ENCODE measurements at regions of chr11 and their contacts with region 1.

Region 1: GRCh38 chr11:111230122-111230465 is 15.4 kb upstream of the POU2AF2 start:
- DNase-seq: no peak
- ATAC-seq: peak in 1 of 2 donors; percentile 30
- H3K4me3 ChIP-seq: peak overlapping the region in 2 of 4 donors; percentile 56 to 60
- H3K27ac ChIP-seq: no peak overlapping the region
- H3K4me1 ChIP-seq: no peaks in the 10 kb centered on the region
- H3K27me3 ChIP-seq: no peaks in the 10 kb centered on the region
- CTCF ChIP-seq: no peak
- POLR2A ChIP-seq: no peak

Region 2: GRCh38 chr11:110195845-110196754 is 1034.0 kb before region 1 on chr11:
- in situ Hi-C with region 1: loop called in 2 of 4 experiments (anchors 25 kb)
- intact Hi-C with region 1: loop called (anchors 2 kb)
- DNase-seq: no peak
- ATAC-seq: no peak
- H3K4me3 ChIP-seq: no peak overlapping the region
- H3K27ac ChIP-seq: no peak overlapping the region
- H3K4me1 ChIP-seq: no peaks in the 10 kb centered on the region
- H3K27me3 ChIP-seq: no peaks in the 10 kb centered on the region
- CTCF ChIP-seq: no peak
- POLR2A ChIP-seq: no peak

Region 3: GRCh38 chr11:110447897-110448745 is 782.0 kb before region 1 on chr11:
- in situ Hi-C with region 1: loop called in 2 of 4 experiments (anchors 10 to 25 kb)
- intact Hi-C with region 1: loop called (anchors 5 kb)
- DNase-seq: no peak
- ATAC-seq: no peak
- H3K4me3 ChIP-seq: no peak overlapping the region
- H3K27ac ChIP-seq: no peak overlapping the region
- H3K4me1 ChIP-seq: peaks cover 0 to 22% of the 10 kb centered on the region in 2 donors
- H3K27me3 ChIP-seq: no peaks in the 10 kb centered on the region
- CTCF ChIP-seq: peak in 3 of 5 experiments; percentile 7 to 44 (median 12)
- POLR2A ChIP-seq: no peak

Region 4: DNA sequence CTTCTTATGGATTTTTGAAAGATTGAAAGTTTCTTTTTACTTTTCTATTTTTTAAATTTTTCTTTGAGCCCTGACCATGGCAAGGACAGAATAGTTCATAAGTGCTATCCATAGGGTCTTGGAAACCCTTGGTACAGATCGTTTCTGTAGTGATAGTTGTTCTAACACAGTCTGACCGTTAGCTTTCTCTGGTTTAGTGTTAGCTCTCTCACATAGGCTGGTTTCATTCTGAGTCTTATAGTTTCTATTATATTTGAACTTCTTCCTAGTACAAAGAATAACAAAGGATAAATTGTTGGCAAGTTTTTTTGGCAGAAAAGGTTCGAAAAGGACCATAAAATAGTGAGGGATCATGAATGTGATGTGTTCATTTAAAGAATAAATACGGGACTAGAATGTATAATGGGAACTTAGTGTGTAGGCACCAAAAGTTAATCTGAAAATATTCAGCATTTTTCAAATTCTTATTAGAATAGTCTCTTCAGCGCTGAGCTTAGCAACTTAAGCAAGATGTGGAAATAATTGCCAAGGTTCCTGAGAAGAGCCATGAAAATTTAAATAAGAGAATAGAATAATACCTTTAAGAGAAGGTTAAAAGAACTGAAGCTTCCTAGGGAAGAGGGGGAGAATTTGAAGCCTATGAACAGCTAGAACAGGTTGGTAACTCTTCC is 776.3 kb before region 1 on chr11:
- in situ Hi-C with region 1: loop called in 2 of 4 experiments (anchors 10 to 25 kb)
- intact Hi-C with region 1: loop called (anchors 5 kb)
- DNase-seq: no peak
- ATAC-seq: no peak
- H3K4me3 ChIP-seq: no peak overlapping the region
- H3K27ac ChIP-seq: no peak overlapping the region
- H3K4me1 ChIP-seq: peaks cover 0 to 1% of the 10 kb centered on the region in 2 donors
- H3K27me3 ChIP-seq: no peaks in the 10 kb centered on the region
- CTCF ChIP-seq: no peak
- POLR2A ChIP-seq: no peak

Region 5: GRCh38 chr11:110463153-110463552 is 766.9 kb before region 1 on chr11:
- in situ Hi-C with region 1: loop called (anchors 10 to 25 kb)
- intact Hi-C with region 1: loop called (anchors 2 kb)
- DNase-seq: peak in 1 of 2 donors; percentile 29
- ATAC-seq: no peak
- H3K4me3 ChIP-seq: no peak overlapping the region
- H3K27ac ChIP-seq: no peak overlapping the region
- H3K4me1 ChIP-seq: no peaks in the 10 kb centered on the region
- H3K27me3 ChIP-seq: no peaks in the 10 kb centered on the region
- CTCF ChIP-seq: peak in 3 of 5 experiments; percentile 21 to 50 (median 27)
- POLR2A ChIP-seq: no peak

Region 6: GRCh38 chr11:110711776-110712658 is 518.1 kb before region 1 on chr11 and contains the start of gene ARHGAP20:
- in situ Hi-C with region 1: no loop called
- intact Hi-C with region 1: loop called (anchors 5 kb)
- DNase-seq: peak in 1 of 2 donors; percentile 20
- ATAC-seq: peak; percentile 57 to 60
- H3K4me3 ChIP-seq: peak within 1 kb of the TSS; percentile 64 to 71 (median 68)
- H3K27ac ChIP-seq: peak within 1 kb of the TSS; percentile 58 to 78 (median 66)
- H3K4me1 ChIP-seq: peaks cover 2 to 11% of the 10 kb centered on the region in 2 donors
- H3K27me3 ChIP-seq: peaks cover 0 to 5% (median 5%) of the 10 kb centered on the region in 3 donors
- CTCF ChIP-seq: no peak
- POLR2A ChIP-seq: peak; percentile 44 to 72
- total RNA-seq, gene ARHGAP20: 0.51 to 2.3 (median 1.1) TPM

Region 7: DNA sequence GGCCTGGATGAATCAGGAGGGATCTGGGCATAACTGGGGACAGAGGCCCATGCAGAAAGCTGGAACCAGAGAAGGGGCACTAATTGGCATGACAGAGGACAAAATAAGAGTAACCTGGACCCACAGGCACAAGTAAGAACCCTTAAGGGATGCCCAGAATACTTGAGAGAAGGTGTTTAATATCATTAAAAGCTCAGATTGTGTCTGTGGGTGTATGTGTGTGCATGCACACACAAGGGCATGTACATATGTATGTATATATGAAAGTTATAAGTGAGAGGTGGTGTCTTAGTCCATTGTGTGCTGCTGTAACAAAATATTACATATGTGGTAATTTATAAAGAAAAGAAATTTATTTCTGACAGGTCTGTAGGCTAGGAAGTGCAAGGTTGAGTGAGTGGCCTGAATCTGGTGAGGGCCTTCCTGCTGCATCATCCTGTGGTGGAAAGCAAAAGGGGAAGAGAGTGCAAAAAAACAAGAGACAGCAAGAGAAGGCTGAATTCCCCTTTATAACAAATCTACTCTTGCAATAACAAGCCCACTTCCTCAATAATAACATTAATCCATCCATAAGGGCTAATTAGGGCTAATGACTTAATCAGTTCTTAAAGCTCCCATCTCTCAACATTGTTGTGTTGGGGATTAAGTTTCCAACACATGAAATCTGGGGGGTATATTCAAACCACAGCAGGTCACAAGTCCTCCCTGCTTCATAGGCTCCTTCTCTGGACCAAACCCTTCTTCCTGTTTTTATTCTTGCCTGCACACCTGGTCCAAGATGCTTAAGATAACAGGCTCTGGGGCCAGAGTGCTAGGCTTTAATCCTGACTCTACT is 52.8 kb before region 1 on chr11:
- in situ Hi-C with region 1: no loop called
- intact Hi-C with region 1: no loop called
- DNase-seq: no peak
- ATAC-seq: no peak
- H3K4me3 ChIP-seq: no peak overlapping the region
- H3K27ac ChIP-seq: no peak overlapping the region
- H3K4me1 ChIP-seq: no peaks in the 10 kb centered on the region
- H3K27me3 ChIP-seq: no peaks in the 10 kb centered on the region
- CTCF ChIP-seq: no peak
- POLR2A ChIP-seq: no peak